Mammary epithelial cell (primary cell): ENCODE measurements at regions of chr17 and their contacts with region 1.

Region 1: DNA sequence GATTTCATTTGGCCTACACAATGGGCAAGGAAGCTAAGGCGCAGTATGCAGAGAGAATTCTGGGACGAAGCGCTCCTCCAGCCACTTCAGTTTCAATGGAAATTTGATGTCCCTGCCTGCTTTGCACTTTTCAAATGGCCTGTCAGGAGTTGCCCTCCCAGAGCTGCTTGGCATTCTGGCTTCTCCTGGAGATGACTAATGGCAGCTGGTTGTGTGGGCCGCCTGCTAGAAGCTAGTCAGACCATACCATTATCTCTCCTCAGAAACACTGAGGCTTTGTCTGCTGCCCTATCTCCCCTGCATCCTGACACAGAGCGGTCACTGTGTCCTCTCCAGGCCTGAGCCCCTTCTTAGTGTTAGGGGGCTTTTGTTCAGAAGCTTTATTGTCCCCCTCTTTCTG is 180.1 kb downstream of the SPECC1 start:
- DNase-seq: peak; percentile 79
- H3K4me3 ChIP-seq: no peak overlapping the region
- H3K27ac ChIP-seq: peak overlapping the region; percentile 19
- H3K4me1 ChIP-seq: peaks cover 34% of the 10 kb centered on the region
- H3K27me3 ChIP-seq: no peaks in the 10 kb centered on the region
- CTCF ChIP-seq: no peak

Region 2: GRCh38 chr17:20128036-20128667 is 61.1 kb before region 1 on chr17:
- CTCF ChIA-PET with region 1: no interaction called
- dilution Hi-C with region 1: loop called (anchors 5 kb)
- in situ Hi-C with region 1: no loop called
- intact Hi-C with region 1: no loop called
- DNase-seq: peak; percentile 9
- H3K4me3 ChIP-seq: no peak overlapping the region
- H3K27ac ChIP-seq: no peak overlapping the region
- H3K4me1 ChIP-seq: no peaks in the 10 kb centered on the region
- H3K27me3 ChIP-seq: no peaks in the 10 kb centered on the region
- CTCF ChIP-seq: no peak

Region 3: DNA sequence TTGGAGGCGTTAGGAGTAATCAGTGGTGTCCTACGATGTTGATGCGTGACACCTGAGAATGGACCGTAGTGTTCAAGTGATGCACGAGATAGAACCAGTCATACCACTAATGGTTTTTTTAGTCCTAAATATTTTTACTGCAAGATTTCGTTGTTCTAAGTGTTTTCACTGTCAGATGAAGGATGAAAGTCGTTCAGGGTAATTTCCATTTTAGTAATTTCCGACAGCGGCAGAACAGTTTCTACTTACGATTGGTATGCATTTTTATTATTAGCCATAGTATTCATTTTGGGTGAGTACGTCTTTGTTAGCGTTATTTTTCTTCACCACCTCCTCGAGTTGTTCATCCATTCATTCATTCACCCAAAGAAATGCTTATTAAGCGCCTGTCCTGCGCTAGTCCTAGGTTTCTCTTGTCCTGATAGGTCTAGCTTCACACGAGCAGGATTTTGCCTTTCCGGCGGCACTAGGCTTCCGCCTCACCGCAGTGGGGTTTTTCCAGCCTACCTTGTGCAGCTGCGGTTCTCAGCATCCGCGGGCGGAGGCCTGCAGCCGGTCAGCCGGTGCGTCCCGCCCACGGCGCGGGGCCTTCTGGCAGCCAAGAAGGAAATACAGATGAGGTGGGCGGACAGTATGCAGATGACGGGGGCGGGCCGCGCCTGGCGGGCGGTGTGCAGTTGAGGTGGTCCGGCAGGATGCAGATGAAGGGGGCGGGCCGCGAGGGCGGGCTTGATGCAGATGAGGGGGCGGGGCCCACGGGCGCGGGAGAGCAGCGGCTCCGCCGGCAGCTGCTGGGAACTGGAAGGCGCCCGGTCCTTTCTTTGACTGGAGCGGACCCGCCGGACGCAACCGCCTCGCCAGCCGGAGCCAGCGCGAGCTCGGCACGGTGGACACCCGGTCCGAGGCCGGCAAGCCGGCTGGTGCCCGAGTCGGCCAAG is 33.8 kb before region 1 on chr17:
- CTCF ChIA-PET with region 1: no interaction called
- dilution Hi-C with region 1: no loop called
- in situ Hi-C with region 1: no loop called
- intact Hi-C with region 1: loop called (anchors 2 kb)
- DNase-seq: peak; percentile 99
- H3K4me3 ChIP-seq: peak overlapping the region; percentile 70 to 74 (median 73)
- H3K27ac ChIP-seq: peak overlapping the region; percentile 31
- H3K4me1 ChIP-seq: peaks cover 4% of the 10 kb centered on the region
- H3K27me3 ChIP-seq: no peaks in the 10 kb centered on the region
- CTCF ChIP-seq: no peak

Region 4: DNA sequence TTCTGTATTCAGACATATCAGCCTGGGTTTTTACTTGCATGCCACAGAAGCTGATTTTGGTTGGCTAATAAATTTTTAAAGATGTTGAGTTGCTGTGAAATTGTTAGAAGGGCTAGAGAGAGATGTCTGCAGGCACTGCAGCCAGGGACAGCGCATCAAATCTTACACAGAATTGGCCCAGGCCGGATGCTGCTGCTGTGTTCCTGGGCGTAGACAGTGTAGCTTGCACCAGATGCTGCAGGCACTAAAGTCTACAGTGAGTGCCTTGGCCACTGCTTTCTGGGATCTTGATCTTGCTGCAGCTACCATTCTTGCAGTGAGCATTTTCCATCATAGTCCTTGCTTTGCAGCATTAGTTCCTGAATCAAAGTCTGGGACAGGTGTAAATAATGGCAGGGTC is 10.3 kb before region 1 on chr17:
- CTCF ChIA-PET with region 1: no interaction called
- dilution Hi-C with region 1: no loop called
- in situ Hi-C with region 1: no loop called
- intact Hi-C with region 1: loop called (anchors 1 kb)
- DNase-seq: no peak
- H3K4me3 ChIP-seq: no peak overlapping the region
- H3K27ac ChIP-seq: no peak overlapping the region
- H3K4me1 ChIP-seq: peaks cover 9% of the 10 kb centered on the region
- H3K27me3 ChIP-seq: no peaks in the 10 kb centered on the region
- CTCF ChIP-seq: no peak